ENCODE measurements at regions of chrX and their contacts with region 1.

Region 1: GRCh38 chrX:153947009-153947769 is 2.7 kb upstream of the RENBP start:
- DNase-seq: no peak
- H3K4me3 ChIP-seq: no peak overlapping the region
- H3K27me3 ChIP-seq: no peaks in the 10 kb centered on the region
- CTCF ChIP-seq: peak; percentile 89

Region 2: DNA sequence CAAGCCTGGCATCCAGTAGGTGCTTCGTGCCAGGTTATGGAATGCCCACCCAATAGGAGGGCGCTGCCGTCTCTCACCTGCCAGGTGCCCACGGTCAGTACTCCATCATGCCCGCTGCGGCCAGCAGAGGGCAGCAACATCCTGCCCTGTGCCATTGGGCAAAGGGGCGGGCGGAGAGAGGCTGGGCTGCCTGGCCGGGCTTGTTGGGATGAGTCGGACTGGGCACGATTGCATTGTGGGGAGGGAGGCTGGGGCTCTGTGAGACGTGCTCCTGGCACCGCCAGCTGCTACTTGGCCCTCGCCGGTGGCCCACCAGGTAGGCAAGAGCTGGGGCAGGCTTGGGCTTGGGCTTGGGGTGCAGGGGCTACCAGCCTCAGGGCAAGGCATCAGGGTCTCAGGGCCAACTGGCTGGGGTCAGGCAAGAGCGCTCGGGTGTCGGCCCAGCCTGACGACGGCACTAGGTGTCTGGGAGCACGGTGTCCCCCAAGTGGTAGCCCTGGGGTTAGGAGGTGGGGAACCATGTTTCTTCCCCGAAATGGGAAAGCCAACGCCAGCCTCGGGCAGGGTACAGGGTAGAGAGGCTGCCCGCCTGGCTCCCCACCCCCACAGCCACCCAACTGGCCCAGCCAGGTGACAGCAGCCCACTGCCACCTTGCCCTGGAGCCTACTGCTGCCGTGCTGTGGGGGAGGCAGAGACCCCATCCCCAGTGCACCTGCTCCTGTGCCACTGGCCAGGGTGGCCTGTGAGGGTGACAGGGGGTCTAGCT is 183.0 kb before region 1 on chrX and contains the start of gene PLXNB3:
- CTCF ChIA-PET with region 1: interaction called, 19 read pairs
- POLR2A ChIA-PET with region 1: no interaction called
- DNase-seq: peak; percentile 4
- H3K4me3 ChIP-seq: peak within 1 kb of the TSS; percentile 33
- H3K27me3 ChIP-seq: no peaks in the 10 kb centered on the region
- CTCF ChIP-seq: peak; percentile 79
- polyA plus RNA-seq, gene PLXNB3: 4.7 and 8.2 TPM in 2 replicates

Region 3: GRCh38 chrX:153845842-153846241 is 101.3 kb before region 1 on chrX:
- CTCF ChIA-PET with region 1: no interaction called
- POLR2A ChIA-PET with region 1: no interaction called
- DNase-seq: no peak
- H3K4me3 ChIP-seq: no peak overlapping the region
- H3K27me3 ChIP-seq: peaks cover 5% of the 10 kb centered on the region; the same call in 1 of the 2 replicates
- CTCF ChIP-seq: no peak

Region 4: DNA sequence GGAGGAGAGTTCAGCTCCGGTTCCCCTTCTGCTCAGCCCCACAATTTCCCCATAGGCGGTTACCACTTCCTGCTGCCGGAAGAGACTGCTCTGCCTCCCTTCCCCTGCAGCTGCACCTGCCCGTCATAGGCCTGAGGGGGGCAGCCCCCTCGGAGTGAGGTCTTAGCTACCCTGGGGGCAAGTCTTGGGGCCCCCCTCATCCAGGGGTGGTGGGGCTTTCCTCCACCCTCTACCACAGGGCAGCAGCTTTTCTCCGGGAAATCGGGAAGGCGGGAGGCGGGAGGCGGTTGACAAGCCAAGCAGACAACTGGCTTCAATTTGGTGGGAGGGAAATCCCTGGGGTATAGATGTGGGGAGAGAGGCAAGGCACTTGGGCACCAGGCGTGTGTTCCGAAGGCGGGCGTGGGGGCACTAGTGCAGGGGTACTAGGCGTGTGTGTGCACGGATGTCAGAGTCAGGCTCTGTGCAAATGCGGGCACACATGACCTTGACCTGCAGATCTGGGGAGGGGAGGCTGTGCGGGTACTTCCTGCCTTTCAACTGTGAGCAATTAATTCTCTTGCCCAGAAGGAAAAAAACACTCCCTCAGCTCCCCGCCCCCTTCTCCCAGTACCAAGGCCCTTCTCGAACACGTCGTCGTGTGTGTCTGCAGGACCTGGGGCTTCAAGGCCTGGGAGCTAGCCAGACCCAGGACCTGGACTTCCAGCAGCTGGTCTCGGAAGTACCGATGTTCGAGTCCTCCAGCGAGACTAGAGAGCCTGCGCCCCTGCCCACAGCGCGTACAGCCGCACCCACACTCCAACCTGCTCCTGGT is 20.1 kb before region 1 on chrX:
- CTCF ChIA-PET with region 1: interaction called, 23 read pairs
- POLR2A ChIA-PET with region 1: no interaction called
- DNase-seq: no peak
- H3K4me3 ChIP-seq: peak overlapping the region; percentile 54
- H3K27me3 ChIP-seq: no peaks in the 10 kb centered on the region
- CTCF ChIP-seq: no peak

Region 5: GRCh38 chrX:153934473-153935325 is 12.5 kb before region 1 on chrX and contains the start of gene NAA10:
- CTCF ChIA-PET with region 1: interaction called, 18 read pairs
- POLR2A ChIA-PET with region 1: no interaction called
- DNase-seq: no peak
- H3K4me3 ChIP-seq: peak within 1 kb of the TSS; percentile 71
- H3K27me3 ChIP-seq: no peaks in the 10 kb centered on the region
- CTCF ChIP-seq: no peak
- polyA plus RNA-seq, gene NAA10: 61.4 and 76.0 TPM in 2 replicates

Region 6: DNA sequence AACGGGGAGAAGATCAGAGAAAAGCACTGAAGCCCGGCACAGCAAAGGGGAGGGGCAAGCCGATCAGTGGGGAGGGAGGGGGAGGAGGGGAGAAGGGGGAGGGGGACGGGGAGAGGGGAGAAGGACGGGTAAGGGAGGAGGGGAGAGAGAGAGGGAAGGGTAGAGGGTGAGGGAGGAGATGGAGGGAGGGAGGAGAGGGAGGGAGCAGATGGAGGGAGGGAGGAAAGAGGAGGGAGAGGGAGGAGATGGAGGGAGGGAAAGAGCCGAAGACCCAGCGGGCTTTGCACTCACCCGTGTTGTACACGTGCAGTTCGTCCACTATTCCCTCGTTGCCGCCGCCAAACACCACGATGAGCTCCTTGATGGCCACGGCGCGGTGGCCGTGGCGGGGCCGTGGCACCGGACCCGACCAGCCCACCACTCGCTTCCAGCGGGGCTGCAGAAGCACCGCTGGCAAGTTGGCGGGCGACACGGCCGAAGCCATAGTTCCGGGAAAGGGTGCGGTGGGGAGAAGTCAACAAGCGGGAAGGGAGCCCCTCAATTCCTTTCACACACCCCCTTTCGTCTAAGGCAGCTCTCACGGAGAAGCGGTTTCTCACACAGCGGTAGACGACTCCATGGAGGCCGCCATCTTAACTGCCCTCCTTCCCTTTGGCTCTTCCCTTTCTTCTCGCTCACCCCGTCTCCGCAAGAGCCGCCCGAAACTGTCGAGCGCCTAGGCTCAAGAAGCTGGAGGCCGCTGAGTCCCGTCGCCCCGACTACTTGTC is 23.4 kb after region 1 on chrX:
- CTCF ChIA-PET with region 1: interaction called, 19 read pairs
- POLR2A ChIA-PET with region 1: no interaction called
- DNase-seq: no peak
- H3K4me3 ChIP-seq: peak overlapping the region; percentile 75
- H3K27me3 ChIP-seq: no peaks in the 10 kb centered on the region
- CTCF ChIP-seq: no peak

Region 7: DNA sequence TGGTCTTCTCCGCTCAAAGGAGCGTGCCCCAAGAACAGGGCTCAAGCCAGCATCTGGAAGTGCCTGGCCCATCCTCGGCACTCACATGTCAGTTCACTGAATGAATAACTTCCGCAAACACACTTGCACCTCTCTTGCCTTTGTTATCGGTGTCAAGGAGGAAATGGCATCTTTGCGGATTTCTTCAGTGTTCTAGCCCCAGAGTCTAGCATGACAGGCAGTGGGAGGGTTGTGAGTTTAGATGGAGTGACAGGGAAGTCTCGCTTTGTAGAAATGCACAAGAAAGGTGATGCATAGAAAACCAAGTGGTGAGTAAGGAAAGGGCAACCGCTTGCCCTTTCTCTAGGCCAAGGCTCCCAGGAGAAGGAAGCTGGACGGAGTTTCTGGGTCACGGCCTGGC is 167.9 kb after region 1 on chrX:
- CTCF ChIA-PET with region 1: no interaction called
- POLR2A ChIA-PET with region 1: no interaction called
- DNase-seq: no peak
- H3K4me3 ChIP-seq: no peak overlapping the region
- H3K27me3 ChIP-seq: peaks cover 1% of the 10 kb centered on the region; the same call in 1 of the 2 replicates
- CTCF ChIP-seq: no peak